ENCODE measurements at regions of chr1 and their contacts with region 1.

Region 1: DNA sequence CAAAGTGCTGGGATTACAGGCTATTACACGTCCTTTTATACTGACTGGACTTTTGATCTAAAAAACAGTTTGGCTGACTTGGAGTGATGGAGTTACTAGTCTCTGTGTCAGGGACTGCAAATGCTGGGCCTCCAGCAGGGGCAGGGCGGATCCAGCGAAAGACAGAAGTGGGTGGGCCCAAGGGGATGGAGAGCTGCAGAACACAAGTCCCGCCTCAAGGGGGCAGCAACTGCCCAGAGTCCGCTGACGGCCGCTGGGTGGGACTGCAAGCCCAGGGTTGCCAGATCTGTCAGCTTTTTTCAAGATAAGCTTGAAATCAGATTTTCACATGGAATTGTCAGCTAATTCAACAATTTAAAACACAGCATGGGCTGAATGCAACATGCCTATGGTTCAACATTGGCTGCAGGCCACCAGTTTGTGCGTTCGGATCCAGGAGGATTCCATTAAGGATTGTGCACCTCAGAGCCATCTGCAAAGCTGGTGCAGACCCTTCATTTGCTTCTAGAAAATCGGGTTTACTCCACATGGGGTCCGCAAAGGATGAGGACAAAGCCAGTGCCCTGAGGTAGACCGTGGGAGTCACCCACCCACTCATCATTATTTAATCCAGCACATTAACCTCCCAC is 10.7 kb downstream of the STMN1 start:
- DNase-seq: peak; percentile 86 to 95 (median 92)
- H3K4me3 ChIP-seq: peak overlapping the region in 33 of 59 donors; percentile 1 to 39 (median 15)
- H3K27ac ChIP-seq: peak overlapping the region; percentile 43 to 99 (median 95)
- H3K27me3 ChIP-seq: no peaks in the 10 kb centered on the region
- CTCF ChIP-seq: peak; percentile 93 to 100 (median 99)

Region 2: DNA sequence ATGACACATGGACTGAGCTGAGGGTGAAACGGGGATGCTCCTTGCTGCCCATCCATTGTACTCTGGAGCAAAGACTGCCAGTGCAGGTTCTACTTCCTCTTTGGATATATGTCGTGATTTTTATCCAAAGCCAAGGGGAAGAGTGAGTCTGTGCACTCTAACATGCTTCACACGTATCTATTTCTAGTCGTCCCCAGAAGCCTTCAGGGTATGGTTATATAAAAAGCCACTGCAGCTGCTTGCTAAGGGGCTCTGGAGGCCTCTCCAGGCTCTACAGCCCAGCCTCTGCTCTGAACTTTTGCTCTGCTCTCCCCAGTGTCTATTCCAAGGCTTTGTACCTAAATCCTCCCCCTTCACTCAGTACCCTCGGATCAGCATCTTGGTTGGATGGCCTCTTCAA is 82.3 kb after region 1 on chr1:
- intact Hi-C with region 1: no loop called
- DNase-seq: no peak
- H3K4me3 ChIP-seq: no peak overlapping the region
- H3K27ac ChIP-seq: peak overlapping the region in 36 of 59 donors; percentile 9 to 78 (median 50)
- H3K27me3 ChIP-seq: no peaks in the 10 kb centered on the region
- CTCF ChIP-seq: no peak

Region 3: DNA sequence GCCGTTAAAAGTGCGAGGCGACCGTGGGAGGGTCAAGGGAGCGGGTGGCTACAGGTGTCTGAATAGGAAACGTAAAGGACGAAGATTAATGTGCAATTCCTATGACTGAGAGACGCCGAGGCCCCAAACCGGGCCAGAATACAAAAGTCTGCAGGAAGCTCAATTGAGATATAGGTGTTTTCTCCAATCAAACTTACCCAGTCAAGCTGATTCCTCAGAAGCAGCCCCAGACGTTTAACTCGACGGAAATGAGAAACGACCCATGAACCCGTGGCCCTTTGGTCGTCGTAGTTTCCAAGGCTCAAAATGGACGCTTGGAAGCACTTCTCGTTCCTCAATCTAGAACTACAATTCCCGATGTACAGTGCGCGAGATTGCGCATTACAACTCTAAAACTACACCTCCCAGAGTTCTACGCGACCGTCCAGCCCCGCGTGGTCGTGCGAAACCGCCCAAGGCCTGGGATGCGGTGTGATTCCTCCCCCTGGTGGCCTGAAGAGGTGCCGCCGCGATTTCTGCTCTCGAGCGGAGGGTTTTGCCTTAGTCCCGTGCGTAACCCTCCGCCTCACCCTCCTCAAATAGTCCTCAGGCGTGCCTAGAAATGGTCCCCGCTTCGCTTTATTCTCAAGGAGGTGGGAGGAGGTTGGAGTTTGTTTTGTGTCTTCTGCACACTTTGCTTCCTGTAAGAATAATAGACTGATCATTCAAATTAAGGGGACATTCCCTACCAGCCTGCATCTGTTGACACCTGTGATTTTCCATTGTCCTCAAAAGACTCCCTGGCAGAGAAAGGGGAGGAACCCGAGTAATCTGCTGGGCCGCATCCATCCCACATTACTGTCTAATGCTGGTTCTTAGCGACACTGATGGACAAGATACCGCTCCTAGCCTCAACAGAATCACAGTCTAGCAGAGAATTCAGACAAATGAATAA is 102.6 kb after region 1 on chr1 and contains the start of gene PAFAH2:
- intact Hi-C with region 1: loop called (anchors 1 kb)
- DNase-seq: peak; percentile 92 to 98 (median 96)
- H3K4me3 ChIP-seq: peak within 1 kb of the TSS; percentile 39 to 93 (median 77)
- H3K27ac ChIP-seq: peak within 1 kb of the TSS; percentile 47 to 95 (median 89)
- H3K27me3 ChIP-seq: no peaks in the 10 kb centered on the region
- CTCF ChIP-seq: peak; percentile 98 to 100 (median 99)
- total RNA-seq, gene PAFAH2: 3.7 to 19.3 (median 8.5) TPM

Region 4: GRCh38 chr1:26094677-26095383 is 199.4 kb after region 1 on chr1:
- intact Hi-C with region 1: loop called in 1 of 2 experiments (anchors 10 kb)
- DNase-seq: peak in 4 of 10 donors; percentile 12 to 61 (median 41)
- H3K4me3 ChIP-seq: no peak overlapping the region
- H3K27ac ChIP-seq: peak overlapping the region in 15 of 59 donors; percentile 4 to 94 (median 24)
- H3K27me3 ChIP-seq: peaks cover 0 to 27% (median 0%) of the 10 kb centered on the region in 45 donors
- CTCF ChIP-seq: peak in 3 of 56 donors; percentile 7 to 9 (median 7)

Region 5: GRCh38 chr1:26111530-26112406 is 216.3 kb after region 1 on chr1 and contains the start of gene PDIK1L:
- intact Hi-C with region 1: loop called (anchors 5 to 10 kb)
- DNase-seq: peak; percentile 78 to 94 (median 88)
- H3K4me3 ChIP-seq: peak within 1 kb of the TSS; percentile 68 to 100 (median 98)
- H3K27ac ChIP-seq: peak within 1 kb of the TSS; percentile 89 to 99 (median 97)
- H3K27me3 ChIP-seq: no peaks in the 10 kb centered on the region
- CTCF ChIP-seq: peak in 20 of 56 donors; percentile 8 to 51 (median 30)
- total RNA-seq, gene PDIK1L: 6.9 to 24.8 (median 16.2) TPM

Region 6: GRCh38 chr1:26145041-26145959 is 249.8 kb after region 1 on chr1:
- intact Hi-C with region 1: loop called in 1 of 2 experiments (anchors 10 kb)
- DNase-seq: peak; percentile 59 to 88 (median 80)
- H3K4me3 ChIP-seq: peak overlapping the region in 16 of 59 donors; percentile 5 to 33 (median 19)
- H3K27ac ChIP-seq: no peak overlapping the region
- H3K27me3 ChIP-seq: no peaks in the 10 kb centered on the region
- CTCF ChIP-seq: peak; percentile 57 to 97 (median 89)

Measured in dorsolateral prefrontal cortex (tissue), 120 donors.